ENCODE measurements at regions of chr6 and their contacts with region 1.

Region 1: DNA sequence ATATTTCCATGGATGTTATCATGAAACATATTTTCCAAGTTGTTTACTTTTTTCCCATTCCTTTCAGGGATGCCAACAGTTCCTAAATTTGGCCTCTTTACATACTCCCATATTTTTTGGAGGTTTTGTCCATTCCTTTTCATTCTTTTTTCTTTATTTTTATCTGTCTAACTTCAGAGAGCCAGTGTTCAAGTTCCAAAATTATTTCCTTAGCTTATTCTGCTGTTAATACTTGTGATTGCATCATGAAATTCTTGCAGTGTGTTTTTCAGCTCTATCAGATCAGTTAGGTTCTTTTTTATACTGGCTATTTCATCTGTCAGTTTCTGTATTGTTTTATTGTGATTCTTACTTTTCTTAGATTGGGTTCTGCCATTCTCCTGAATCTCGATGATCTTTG is 89.9 kb upstream of the TCF21 start:
- DNase-seq: no peak
- ATAC-seq: no peak
- H3K4me3 ChIP-seq: no peak overlapping the region
- H3K27ac ChIP-seq: peak overlapping the region in 1 of 2 donors; percentile 67
- H3K4me1 ChIP-seq: peaks cover 0 to 4% of the 10 kb centered on the region in 2 donors
- H3K27me3 ChIP-seq: no peaks in the 10 kb centered on the region

Region 2: GRCh38 chr6:133764008-133764753 is 34.9 kb before region 1 on chr6:
- intact Hi-C with region 1: loop called in 1 of 2 experiments (anchors 5 kb)
- DNase-seq: no peak
- ATAC-seq: no peak
- H3K4me3 ChIP-seq: no peak overlapping the region
- H3K27ac ChIP-seq: peak overlapping the region; percentile 57 to 68
- H3K4me1 ChIP-seq: peaks cover 6 to 16% of the 10 kb centered on the region in 2 donors
- H3K27me3 ChIP-seq: no peaks in the 10 kb centered on the region

Region 3: GRCh38 chr6:134111062-134111677 is 312.1 kb after region 1 on chr6:
- intact Hi-C with region 1: no loop called
- DNase-seq: no peak
- ATAC-seq: peak; percentile 56
- H3K4me3 ChIP-seq: no peak overlapping the region
- H3K27ac ChIP-seq: no peak overlapping the region
- H3K4me1 ChIP-seq: no peaks in the 10 kb centered on the region
- H3K27me3 ChIP-seq: no peaks in the 10 kb centered on the region